MCF 10A (cell line): ENCODE measurements at regions of chr3 and their contacts with region 1.

Region 1: GRCh38 chr3:169754721-169755120 is 10.1 kb downstream of the TERC start:
- DNase-seq: peak; percentile 63
- H3K4me3 Mint-ChIP-seq: no peak overlapping the region
- H3K27ac Mint-ChIP-seq: peak overlapping the region; percentile 82
- H3K4me1 Mint-ChIP-seq: peaks cover 21% of the 10 kb centered on the region
- H3K27me3 Mint-ChIP-seq: no peaks in the 10 kb centered on the region
- CTCF ChIP-seq: no peak

Region 2: GRCh38 chr3:169650503-169650902 is 104.2 kb before region 1 on chr3:
- CTCF ChIA-PET with region 1: no interaction called
- POLR2A ChIA-PET with region 1: no interaction called
- intact Hi-C with region 1: no loop called
- DNase-seq: no peak
- H3K4me3 Mint-ChIP-seq: no peak overlapping the region
- H3K27ac Mint-ChIP-seq: no peak overlapping the region
- H3K4me1 Mint-ChIP-seq: no peaks in the 10 kb centered on the region
- H3K27me3 Mint-ChIP-seq: no peaks in the 10 kb centered on the region
- CTCF ChIP-seq: no peak

Region 3: GRCh38 chr3:169772897-169773828 is 18.4 kb after region 1 on chr3 and contains the start of gene MYNN:
- CTCF ChIA-PET with region 1: interaction called, 4 read pairs
- POLR2A ChIA-PET with region 1: interaction called, 50 read pairs
- intact Hi-C with region 1: no loop called
- DNase-seq: peak; percentile 87
- H3K4me3 Mint-ChIP-seq: peak within 1 kb of the TSS; percentile 94
- H3K27ac Mint-ChIP-seq: peak within 1 kb of the TSS; percentile 99
- H3K4me1 Mint-ChIP-seq: peaks cover 4% of the 10 kb centered on the region
- H3K27me3 Mint-ChIP-seq: no peaks in the 10 kb centered on the region
- CTCF ChIP-seq: no peak
- total RNA-seq, gene MYNN: 18.0 and 20.4 TPM in 2 replicates